Adrenal gland (tissue), 19 donors: ENCODE measurements at regions of chr10 and their contacts with region 1.

Region 1: GRCh38 chr10:62244780-62245467 is 23.7 kb downstream of the RTKN2 start:
- DNase-seq: peak; percentile 24 to 69 (median 55)
- H3K4me3 ChIP-seq: no peak overlapping the region
- H3K27ac ChIP-seq: no peak overlapping the region
- H3K4me1 ChIP-seq: peaks cover 0 to 6% of the 10 kb centered on the region in 2 donors
- H3K27me3 ChIP-seq: peaks cover 15% of the 10 kb centered on the region
- CTCF ChIP-seq: peak; percentile 73 to 92 (median 86)
- POLR2A ChIP-seq: no peak

Region 2: DNA sequence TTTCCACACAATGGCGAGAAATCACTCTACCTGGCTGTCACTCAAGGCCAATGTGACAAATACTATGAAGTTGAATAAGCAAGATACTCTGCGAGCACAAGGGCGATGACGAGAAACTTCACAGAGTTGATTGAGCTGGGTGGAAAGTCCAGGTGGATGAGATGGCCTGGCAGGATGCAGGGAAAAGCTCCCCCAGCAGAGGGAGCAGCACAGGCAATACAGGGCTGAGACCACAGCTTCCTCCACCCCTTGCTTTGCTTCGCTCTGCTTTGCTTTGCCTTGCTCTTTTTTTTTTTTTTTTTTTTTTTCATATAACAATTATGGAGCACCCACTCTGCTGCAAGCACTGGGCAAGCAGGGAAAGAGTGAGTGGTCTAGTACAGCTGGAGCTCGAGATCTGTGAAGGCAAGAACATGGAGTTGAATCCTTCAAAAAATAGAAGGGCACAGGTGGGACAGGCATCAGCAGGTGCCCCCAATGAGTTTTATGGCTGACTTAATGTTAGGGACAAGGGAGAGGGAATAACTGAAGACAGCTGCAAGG is 493.9 kb before region 1 on chr10:
- intact Hi-C with region 1: loop called in 1 of 2 experiments (anchors 10 kb)
- DNase-seq: peak; percentile 78 to 91 (median 85)
- H3K4me3 ChIP-seq: no peak overlapping the region
- H3K27ac ChIP-seq: no peak overlapping the region
- H3K4me1 ChIP-seq: peaks cover 11 to 19% of the 10 kb centered on the region in 2 donors
- H3K27me3 ChIP-seq: no peaks in the 10 kb centered on the region
- CTCF ChIP-seq: peak; percentile 65 to 83 (median 80)
- POLR2A ChIP-seq: no peak

Region 3: GRCh38 chr10:61903221-61903927 is 341.6 kb before region 1 on chr10:
- intact Hi-C with region 1: loop called in 1 of 2 experiments (anchors 10 kb)
- DNase-seq: peak; percentile 61 to 73 (median 67)
- H3K4me3 ChIP-seq: peak overlapping the region; percentile 34 to 78 (median 67)
- H3K27ac ChIP-seq: peak overlapping the region; percentile 89 to 99 (median 94)
- H3K4me1 ChIP-seq: peaks cover 10 to 37% of the 10 kb centered on the region in 2 donors
- H3K27me3 ChIP-seq: no peaks in the 10 kb centered on the region
- CTCF ChIP-seq: peak in 3 of 6 experiments; percentile 7 to 30 (median 11)
- POLR2A ChIP-seq: peak; percentile 17 to 72

Region 4: GRCh38 chr10:62038609-62039190 is 206.2 kb before region 1 on chr10:
- intact Hi-C with region 1: loop called (anchors 2 to 10 kb)
- DNase-seq: peak; percentile 57 to 89 (median 74)
- H3K4me3 ChIP-seq: no peak overlapping the region
- H3K27ac ChIP-seq: no peak overlapping the region
- H3K4me1 ChIP-seq: peaks cover 9 to 33% of the 10 kb centered on the region in 2 donors
- H3K27me3 ChIP-seq: no peaks in the 10 kb centered on the region
- CTCF ChIP-seq: peak; percentile 65 to 89 (median 82)
- POLR2A ChIP-seq: no peak

Region 5: DNA sequence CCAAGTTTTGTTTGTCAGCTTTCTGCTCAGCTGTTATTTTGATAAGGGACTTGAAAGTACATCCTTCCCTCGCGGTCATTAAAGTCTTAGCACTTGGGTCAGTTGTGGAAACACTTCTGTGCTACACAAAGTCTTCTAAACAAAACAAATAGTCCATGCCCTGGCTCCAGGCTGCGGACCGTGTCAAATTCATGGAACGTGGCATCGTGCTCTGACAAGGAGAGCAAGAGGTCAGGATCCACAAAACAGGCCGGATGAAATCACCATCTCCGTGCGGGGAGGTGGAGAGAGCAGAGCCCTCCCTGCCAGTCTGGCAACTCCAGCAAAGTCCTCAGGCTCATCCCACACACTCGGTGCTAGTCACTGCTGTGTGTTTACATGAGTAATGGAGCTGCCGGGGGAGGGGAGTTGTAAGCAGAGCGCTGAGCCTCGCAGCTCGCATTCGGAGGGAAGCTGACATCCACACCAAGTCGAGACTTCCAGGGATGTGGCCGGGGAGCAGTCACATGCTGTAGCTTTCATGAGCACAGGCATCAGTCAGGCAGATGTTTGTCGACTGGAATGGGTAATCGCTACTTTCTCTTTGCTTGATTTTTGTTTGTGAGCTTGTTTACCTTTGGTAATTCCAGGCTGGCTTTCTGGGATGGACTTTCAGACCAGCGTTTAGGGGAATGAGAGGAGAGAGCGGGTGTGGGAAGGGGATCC is 195.9 kb before region 1 on chr10:
- intact Hi-C with region 1: loop called in 1 of 2 experiments (anchors 10 kb)
- DNase-seq: peak; percentile 71 to 94 (median 91)
- H3K4me3 ChIP-seq: peak overlapping the region in 3 of 4 donors; percentile 1 to 58 (median 20)
- H3K27ac ChIP-seq: peak overlapping the region; percentile 15 to 85 (median 55)
- H3K4me1 ChIP-seq: peaks cover 22 to 62% of the 10 kb centered on the region in 2 donors
- H3K27me3 ChIP-seq: no peaks in the 10 kb centered on the region
- CTCF ChIP-seq: no peak
- POLR2A ChIP-seq: peak; percentile 64 to 76